ENCODE measurements at regions of chr12 and their contacts with region 1.

Region 1: GRCh38 chr12:685388-685787 is 22.1 kb upstream of the NINJ2 start:
- DNase-seq: peak; percentile 90 to 97 (median 92)
- H3K4me3 ChIP-seq: no peak overlapping the region
- H3K4me3 Mint-ChIP-seq: peak overlapping the region in 7 of 8 donors; percentile 53 to 81 (median 73)
- H3K27ac ChIP-seq: peak overlapping the region; percentile 81
- H3K27ac Mint-ChIP-seq: peak overlapping the region; percentile 90 to 100 (median 99)
- H3K4me1 ChIP-seq: peaks cover 33% of the 10 kb centered on the region
- H3K4me1 Mint-ChIP-seq: peaks cover 32 to 43% (median 35%) of the 10 kb centered on the region in 4 donors
- H3K27me3 ChIP-seq: no peaks in the 10 kb centered on the region
- H3K27me3 Mint-ChIP-seq: no peaks in the 10 kb centered on the region

Region 2: DNA sequence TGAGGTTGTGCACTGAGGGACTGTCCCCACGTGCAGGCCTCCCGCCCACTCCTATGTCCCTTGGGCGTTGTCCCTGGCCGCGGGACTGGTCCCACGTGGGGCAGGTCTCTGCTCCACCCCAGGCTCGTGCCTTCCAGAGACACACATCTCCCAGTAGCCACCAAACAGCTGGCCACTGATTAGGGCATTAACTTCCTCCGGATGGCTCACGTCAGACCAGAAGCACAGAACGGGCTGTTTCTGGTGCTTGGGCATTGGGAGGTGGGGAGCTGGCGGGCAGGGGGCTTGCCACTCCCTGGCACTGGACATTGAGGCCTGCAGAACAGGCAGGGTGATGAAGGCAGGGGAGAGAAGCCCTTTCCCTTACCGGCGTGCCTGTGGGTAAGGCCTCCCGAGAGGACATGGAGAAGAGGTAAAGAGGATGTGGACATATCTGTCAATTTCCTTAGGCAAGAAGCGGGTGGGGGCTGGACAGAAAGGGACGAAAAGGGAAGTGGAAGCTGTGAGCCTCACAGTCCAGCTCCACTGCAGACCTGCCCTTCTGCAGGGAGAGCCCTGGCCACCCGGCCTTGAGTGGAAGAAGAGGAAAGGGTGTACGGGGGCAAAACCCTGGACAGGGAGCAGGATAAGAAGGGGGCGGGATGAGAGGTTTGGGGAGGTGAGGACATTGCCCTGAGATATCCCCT is 123.3 kb before region 1 on chr12:
- CTCF ChIA-PET with region 1: no interaction called
- POLR2A ChIA-PET with region 1: no interaction called
- intact Hi-C with region 1: no loop called
- DNase-seq: no peak
- H3K4me3 ChIP-seq: no peak overlapping the region
- H3K4me3 Mint-ChIP-seq: peak overlapping the region; percentile 60 to 93 (median 84)
- H3K27ac ChIP-seq: peak overlapping the region; percentile 71
- H3K27ac Mint-ChIP-seq: peak overlapping the region; percentile 28 to 97 (median 93)
- H3K4me1 ChIP-seq: peaks cover 55% of the 10 kb centered on the region
- H3K4me1 Mint-ChIP-seq: peaks cover 49 to 75% (median 61%) of the 10 kb centered on the region in 4 donors
- H3K27me3 ChIP-seq: no peaks in the 10 kb centered on the region
- H3K27me3 Mint-ChIP-seq: no peaks in the 10 kb centered on the region

Region 3: DNA sequence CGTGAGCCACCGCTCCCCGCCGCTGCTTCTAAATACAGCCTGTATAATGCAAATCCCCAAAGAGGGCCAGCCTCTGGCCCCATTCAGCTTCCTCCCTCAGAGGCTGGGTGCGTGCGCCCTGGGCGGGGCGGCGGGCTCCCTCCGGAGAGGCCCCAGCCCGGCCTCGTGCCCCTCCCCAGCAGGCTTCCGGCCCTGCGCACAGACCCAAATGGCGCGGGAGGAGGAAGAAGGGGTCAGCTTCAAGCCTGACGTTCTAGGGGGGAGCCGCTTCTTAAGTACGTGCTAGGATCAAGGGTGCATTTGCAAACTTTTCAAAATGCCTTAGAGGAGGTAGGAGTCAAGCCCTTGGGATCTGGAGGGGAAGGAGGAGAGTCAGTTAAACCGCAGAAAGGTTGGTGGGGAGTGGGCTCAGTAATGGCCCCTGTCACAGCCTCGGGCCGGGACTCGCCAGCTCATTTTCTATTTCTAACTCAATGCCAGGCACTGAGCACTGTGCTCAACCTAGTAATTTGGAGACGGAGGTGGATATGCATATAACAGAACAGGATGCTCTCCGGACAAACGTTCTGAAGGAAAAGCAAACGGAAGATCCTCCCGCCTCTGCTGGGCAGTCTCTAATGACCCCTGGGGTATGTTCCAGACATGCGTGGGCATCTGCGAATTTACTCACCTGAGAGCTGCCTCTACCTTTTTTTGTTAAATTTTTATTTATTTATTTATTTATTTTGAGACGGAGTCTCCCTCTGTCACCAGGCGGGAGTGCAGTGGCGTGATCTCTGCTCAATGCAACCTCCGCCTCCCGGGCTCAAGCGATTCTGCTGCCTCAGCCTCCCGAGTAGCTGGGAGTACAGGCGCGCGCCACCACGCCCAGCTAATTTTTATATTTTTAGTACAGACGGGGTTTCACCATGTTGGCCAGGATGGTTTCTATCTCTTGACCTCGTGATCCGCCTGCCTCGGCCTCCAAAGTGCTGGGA is 54.4 kb before region 1 on chr12:
- CTCF ChIA-PET with region 1: no interaction called
- POLR2A ChIA-PET with region 1: interaction called, 11 read pairs
- intact Hi-C with region 1: no loop called
- DNase-seq: peak in 3 of 5 donors; percentile 66 to 81 (median 68)
- H3K4me3 ChIP-seq: peak overlapping the region in 1 of 2 donors; percentile 68
- H3K4me3 Mint-ChIP-seq: peak overlapping the region in 6 of 8 donors; percentile 92 to 98 (median 93)
- H3K27ac ChIP-seq: peak overlapping the region; percentile 76
- H3K27ac Mint-ChIP-seq: peak overlapping the region in 5 of 7 donors; percentile 86 to 99 (median 95)
- H3K4me1 ChIP-seq: peaks cover 15% of the 10 kb centered on the region
- H3K4me1 Mint-ChIP-seq: peaks cover 4 to 28% (median 18%) of the 10 kb centered on the region in 4 donors
- H3K27me3 ChIP-seq: no peaks in the 10 kb centered on the region
- H3K27me3 Mint-ChIP-seq: no peaks in the 10 kb centered on the region

Region 4: DNA sequence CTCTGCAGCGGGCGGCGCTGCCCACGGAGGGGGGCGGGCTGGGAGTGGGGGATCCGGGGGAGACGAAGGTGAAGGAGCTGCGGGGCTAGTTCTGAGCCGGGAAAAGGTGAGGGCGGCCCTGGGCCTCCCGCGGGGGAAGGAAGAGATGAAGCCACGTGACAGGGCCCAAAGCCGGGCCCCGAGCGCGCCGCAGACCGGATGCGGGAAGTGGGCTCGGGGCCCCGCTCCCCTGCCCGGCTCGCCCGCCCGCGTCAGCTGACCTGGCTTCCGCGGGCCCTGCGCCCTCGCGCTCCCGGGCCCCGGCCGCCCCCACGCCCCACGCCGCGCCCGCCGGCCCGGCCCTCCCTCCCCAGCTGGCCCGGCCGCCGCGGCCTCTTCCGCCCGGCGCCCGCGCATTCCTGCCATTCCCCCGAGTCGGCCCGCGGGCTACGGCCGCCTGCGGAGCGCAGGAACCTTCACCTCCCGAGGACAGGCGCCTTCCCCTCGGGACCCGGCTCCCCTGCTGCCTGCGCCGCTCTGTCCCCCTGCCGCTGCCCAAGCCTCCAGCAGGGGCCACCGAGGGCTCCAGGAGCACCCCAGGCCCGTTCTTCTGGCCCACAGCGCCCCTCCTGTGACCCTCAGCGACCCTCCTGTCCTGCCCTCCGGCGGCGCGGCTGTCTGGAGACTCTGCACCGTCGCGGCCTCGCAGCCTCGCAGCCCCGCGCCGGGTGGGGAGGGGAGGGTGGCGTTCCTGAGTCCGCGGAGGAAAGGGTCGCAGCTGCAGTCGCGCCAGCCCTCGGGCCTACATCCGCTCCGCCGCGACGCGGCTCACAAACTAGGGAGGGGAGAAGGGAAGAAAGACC is 42.5 kb before region 1 on chr12:
- CTCF ChIA-PET with region 1: interaction called, 6 read pairs
- POLR2A ChIA-PET with region 1: interaction called, 15 read pairs
- intact Hi-C with region 1: loop called (anchors 1 kb)
- DNase-seq: peak; percentile 79 to 85 (median 83)
- H3K4me3 ChIP-seq: peak overlapping the region; percentile 25 to 76
- H3K4me3 Mint-ChIP-seq: peak overlapping the region; percentile 90 to 94 (median 91)
- H3K27ac ChIP-seq: peak overlapping the region; percentile 89
- H3K27ac Mint-ChIP-seq: peak overlapping the region; percentile 93 to 99 (median 96)
- H3K4me1 ChIP-seq: peaks cover 63% of the 10 kb centered on the region
- H3K4me1 Mint-ChIP-seq: peaks cover 39 to 71% (median 59%) of the 10 kb centered on the region in 4 donors
- H3K27me3 ChIP-seq: no peaks in the 10 kb centered on the region
- H3K27me3 Mint-ChIP-seq: no peaks in the 10 kb centered on the region

Region 5: GRCh38 chr12:662566-663292 is 22.7 kb before region 1 on chr12:
- CTCF ChIA-PET with region 1: interaction called, 5 read pairs
- POLR2A ChIA-PET with region 1: interaction called, 33 read pairs
- intact Hi-C with region 1: loop called (anchors 2 kb)
- DNase-seq: no peak
- H3K4me3 ChIP-seq: peak overlapping the region in 1 of 2 donors; percentile 16
- H3K4me3 Mint-ChIP-seq: peak overlapping the region; percentile 80 to 93 (median 86)
- H3K27ac ChIP-seq: peak overlapping the region; percentile 49
- H3K27ac Mint-ChIP-seq: peak overlapping the region; percentile 14 to 95 (median 90)
- H3K4me1 ChIP-seq: peaks cover 50% of the 10 kb centered on the region
- H3K4me1 Mint-ChIP-seq: peaks cover 29 to 58% (median 48%) of the 10 kb centered on the region in 4 donors
- H3K27me3 ChIP-seq: no peaks in the 10 kb centered on the region
- H3K27me3 Mint-ChIP-seq: no peaks in the 10 kb centered on the region

Region 6: DNA sequence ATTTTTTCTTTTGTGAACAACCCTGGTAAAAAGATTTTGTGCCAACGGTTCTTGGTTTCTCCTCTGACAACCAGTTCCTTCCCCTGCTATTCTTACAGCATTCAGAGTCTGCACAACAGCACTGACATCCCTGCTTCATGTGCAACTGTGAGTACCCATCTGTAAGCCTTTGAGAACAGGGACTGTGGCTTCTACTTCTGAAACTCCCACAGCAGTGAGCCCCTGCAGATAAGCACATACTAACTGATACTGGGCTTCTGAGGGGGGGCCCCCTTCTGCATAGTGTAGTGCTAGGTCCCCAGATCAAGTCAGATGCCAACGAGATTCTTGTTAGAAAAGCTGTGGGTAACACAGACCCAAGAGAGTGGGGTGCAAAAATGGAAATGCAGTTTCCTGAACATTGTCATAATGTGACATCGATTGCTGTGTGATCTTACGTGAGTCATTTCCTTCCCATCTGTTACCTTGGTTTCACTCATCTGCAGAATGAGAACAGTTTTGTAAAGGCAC is 11.1 kb before region 1 on chr12:
- CTCF ChIA-PET with region 1: interaction called, 11 read pairs
- POLR2A ChIA-PET with region 1: interaction called, 60 read pairs
- intact Hi-C with region 1: loop called (anchors 1 kb)
- DNase-seq: peak; percentile 77 to 91 (median 83)
- H3K4me3 ChIP-seq: peak overlapping the region; percentile 27 to 44
- H3K4me3 Mint-ChIP-seq: peak overlapping the region; percentile 67 to 91 (median 84)
- H3K27ac ChIP-seq: peak overlapping the region; percentile 70
- H3K27ac Mint-ChIP-seq: peak overlapping the region; percentile 93 to 100 (median 99)
- H3K4me1 ChIP-seq: peaks cover 61% of the 10 kb centered on the region
- H3K4me1 Mint-ChIP-seq: peaks cover 36 to 67% (median 53%) of the 10 kb centered on the region in 4 donors
- H3K27me3 ChIP-seq: no peaks in the 10 kb centered on the region
- H3K27me3 Mint-ChIP-seq: no peaks in the 10 kb centered on the region

Region 7: GRCh38 chr12:697481-697880 is 12.1 kb after region 1 on chr12:
- CTCF ChIA-PET with region 1: interaction called, 4 read pairs
- POLR2A ChIA-PET with region 1: interaction called, 11 read pairs
- intact Hi-C with region 1: no loop called
- DNase-seq: no peak
- H3K4me3 ChIP-seq: no peak overlapping the region
- H3K4me3 Mint-ChIP-seq: peak overlapping the region in 7 of 8 donors; percentile 43 to 81 (median 55)
- H3K27ac ChIP-seq: no peak overlapping the region
- H3K27ac Mint-ChIP-seq: peak overlapping the region; percentile 52 to 94 (median 91)
- H3K4me1 ChIP-seq: peaks cover 17% of the 10 kb centered on the region
- H3K4me1 Mint-ChIP-seq: peaks cover 7 to 27% (median 15%) of the 10 kb centered on the region in 4 donors
- H3K27me3 ChIP-seq: no peaks in the 10 kb centered on the region
- H3K27me3 Mint-ChIP-seq: no peaks in the 10 kb centered on the region

Region 8: GRCh38 chr12:724194-724855 is 38.9 kb after region 1 on chr12:
- CTCF ChIA-PET with region 1: interaction called, 4 read pairs
- POLR2A ChIA-PET with region 1: interaction called, 9 read pairs
- intact Hi-C with region 1: loop called (anchors 2 kb)
- DNase-seq: peak in 1 of 5 donors; percentile 20
- H3K4me3 ChIP-seq: no peak overlapping the region
- H3K4me3 Mint-ChIP-seq: peak overlapping the region in 6 of 8 donors; percentile 1 to 49 (median 32)
- H3K27ac ChIP-seq: peak overlapping the region; percentile 34
- H3K27ac Mint-ChIP-seq: peak overlapping the region; percentile 59 to 93 (median 85)
- H3K4me1 ChIP-seq: peaks cover 61% of the 10 kb centered on the region
- H3K4me1 Mint-ChIP-seq: peaks cover 46 to 82% (median 65%) of the 10 kb centered on the region in 4 donors
- H3K27me3 ChIP-seq: no peaks in the 10 kb centered on the region
- H3K27me3 Mint-ChIP-seq: no peaks in the 10 kb centered on the region

Region 9: DNA sequence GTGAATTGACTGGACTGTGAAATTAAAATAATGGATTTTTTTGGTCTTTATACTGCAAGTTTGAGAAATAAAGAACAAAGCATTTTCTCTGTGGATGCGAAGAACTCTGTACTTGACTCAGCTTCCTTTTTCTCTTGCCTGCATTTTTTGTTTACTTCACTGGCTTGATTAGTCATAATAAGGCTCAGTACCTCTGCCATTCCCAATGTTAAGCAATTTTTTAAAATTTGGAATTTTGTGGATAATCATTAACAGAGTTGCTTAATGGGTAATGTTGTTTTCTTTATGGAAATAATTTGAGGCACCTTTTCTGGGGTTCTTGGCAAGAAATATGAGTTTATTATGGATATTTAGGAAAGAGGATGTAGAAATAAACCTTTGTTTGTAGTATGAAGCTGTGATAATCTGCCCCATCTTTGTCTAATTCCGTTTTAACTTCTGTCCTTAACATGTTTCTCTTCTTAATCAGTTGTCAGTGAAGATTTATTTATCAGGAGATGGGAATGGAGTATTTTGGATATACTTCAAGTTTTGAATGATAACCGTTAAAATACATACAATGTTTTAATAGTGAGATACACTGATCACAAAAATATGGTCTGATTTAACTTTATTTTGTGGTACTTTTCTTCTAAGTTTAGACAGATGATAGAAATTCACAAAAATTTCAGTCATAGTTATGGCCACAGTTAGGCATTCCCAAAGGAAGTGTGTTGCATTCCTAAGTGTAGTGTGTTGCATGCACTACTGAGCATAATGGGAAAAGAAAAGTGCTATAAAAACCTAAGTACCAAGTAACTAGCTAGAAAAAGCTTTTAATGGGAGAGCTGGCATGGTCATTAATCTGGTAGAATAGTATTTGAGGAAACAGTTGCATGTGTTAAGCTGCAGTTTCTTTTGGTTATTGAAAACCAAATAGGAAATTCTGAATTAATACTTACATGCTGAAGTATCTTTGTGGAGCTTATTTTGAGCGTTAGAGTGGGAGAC is 94.7 kb after region 1 on chr12:
- CTCF ChIA-PET with region 1: no interaction called
- POLR2A ChIA-PET with region 1: no interaction called
- intact Hi-C with region 1: no loop called
- DNase-seq: no peak
- H3K4me3 ChIP-seq: peak overlapping the region in 1 of 2 donors; percentile 16
- H3K4me3 Mint-ChIP-seq: peak overlapping the region; percentile 78 to 94 (median 83)
- H3K27ac ChIP-seq: peak overlapping the region; percentile 16
- H3K27ac Mint-ChIP-seq: peak overlapping the region; percentile 76 to 93 (median 82)
- H3K4me1 ChIP-seq: peaks cover 81% of the 10 kb centered on the region
- H3K4me1 Mint-ChIP-seq: peaks cover 53 to 78% (median 64%) of the 10 kb centered on the region in 4 donors
- H3K27me3 ChIP-seq: no peaks in the 10 kb centered on the region
- H3K27me3 Mint-ChIP-seq: no peaks in the 10 kb centered on the region

Measured in CD4-positive, alpha-beta memory T cell (primary cell).